ENCODE measurements at regions of chr5 and their contacts with region 1.

Region 1: DNA sequence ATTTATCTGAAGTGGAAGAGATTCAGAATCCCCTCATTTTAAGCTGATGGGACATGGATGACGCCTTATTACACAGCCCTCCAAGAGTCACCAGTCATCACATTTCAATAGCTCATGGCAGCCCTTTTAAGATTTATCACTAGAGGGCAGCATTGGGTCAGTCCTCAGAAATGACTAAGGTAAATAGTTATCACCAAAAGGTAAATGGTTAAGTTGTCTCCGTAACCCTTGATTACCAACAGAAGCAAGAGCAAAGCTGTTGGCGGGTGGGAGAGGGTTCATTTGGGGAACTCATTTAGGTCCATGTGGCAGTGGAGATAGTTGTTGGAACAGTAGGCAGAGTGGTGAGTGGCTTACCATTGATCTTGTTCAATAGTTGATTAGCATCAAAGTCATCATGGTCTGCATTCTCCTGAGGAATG is 12.0 kb upstream of the C9 start:
- DNase-seq: peak in 1 of 2 donors; percentile 66
- ATAC-seq: peak; percentile 57 to 81 (median 70)
- H3K4me3 ChIP-seq: no peak overlapping the region
- H3K4me3 Mint-ChIP-seq: no peak overlapping the region
- H3K27ac ChIP-seq: no peak overlapping the region
- H3K27ac Mint-ChIP-seq: peak overlapping the region in 1 of 2 donors; percentile 20
- H3K4me1 ChIP-seq: no peaks in the 10 kb centered on the region
- H3K4me1 Mint-ChIP-seq: peaks cover under 1 to 12% of the 10 kb centered on the region in 2 donors
- H3K27me3 ChIP-seq: no peaks in the 10 kb centered on the region
- H3K27me3 Mint-ChIP-seq: no peaks in the 10 kb centered on the region
- CTCF ChIP-seq: peak; percentile 78

Region 2: DNA sequence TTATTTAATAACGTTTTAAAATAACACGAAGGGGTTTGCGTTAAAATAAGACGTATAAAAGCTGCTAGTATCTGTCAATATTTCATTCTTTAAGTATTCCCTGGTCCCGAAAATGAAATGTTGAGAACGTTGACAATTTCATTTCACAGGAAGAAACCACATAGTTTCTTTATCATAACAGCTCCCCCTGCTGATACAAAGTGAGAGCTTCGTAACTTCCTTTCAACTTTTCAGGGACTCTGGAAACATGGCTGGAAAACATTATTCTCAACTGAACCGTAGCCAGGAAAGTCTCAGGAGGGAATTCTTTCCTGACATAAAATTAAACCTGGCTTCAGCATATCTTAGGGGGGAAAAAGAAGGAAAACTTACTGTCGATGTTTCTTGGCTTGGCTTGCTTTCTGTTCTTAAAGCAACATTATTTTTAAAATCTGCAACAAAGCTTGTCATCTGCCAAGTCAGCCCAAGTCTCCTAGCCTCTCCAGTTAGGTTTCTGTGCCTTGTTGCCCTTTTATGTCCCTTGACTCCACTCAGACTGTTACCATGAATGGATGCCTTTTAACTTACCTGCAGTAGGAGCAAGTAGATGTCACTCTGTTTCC is 171.3 kb after region 1 on chr5:
- intact Hi-C with region 1: loop called (anchors 1 kb)
- DNase-seq: peak in 1 of 2 donors; percentile 68
- ATAC-seq: peak; percentile 42 to 65 (median 46)
- H3K4me3 ChIP-seq: no peak overlapping the region
- H3K4me3 Mint-ChIP-seq: peak overlapping the region; percentile 18
- H3K27ac ChIP-seq: no peak overlapping the region
- H3K27ac Mint-ChIP-seq: peak overlapping the region in 1 of 2 donors; percentile 47
- H3K4me1 ChIP-seq: no peaks in the 10 kb centered on the region
- H3K4me1 Mint-ChIP-seq: peaks cover 0 to 5% of the 10 kb centered on the region in 2 donors
- H3K27me3 ChIP-seq: no peaks in the 10 kb centered on the region
- H3K27me3 Mint-ChIP-seq: no peaks in the 10 kb centered on the region
- CTCF ChIP-seq: peak; percentile 77

Region 3: GRCh38 chr5:39570403-39571027 is 194.2 kb after region 1 on chr5:
- intact Hi-C with region 1: loop called (anchors 1 kb)
- DNase-seq: peak in 1 of 2 donors; percentile 51
- ATAC-seq: peak in 2 of 3 donors; percentile 55 to 64
- H3K4me3 ChIP-seq: no peak overlapping the region
- H3K4me3 Mint-ChIP-seq: no peak overlapping the region
- H3K27ac ChIP-seq: no peak overlapping the region
- H3K27ac Mint-ChIP-seq: no peak overlapping the region
- H3K4me1 ChIP-seq: no peaks in the 10 kb centered on the region
- H3K4me1 Mint-ChIP-seq: no peaks in the 10 kb centered on the region
- H3K27me3 ChIP-seq: no peaks in the 10 kb centered on the region
- H3K27me3 Mint-ChIP-seq: peaks cover 0 to 7% of the 10 kb centered on the region in 2 donors
- CTCF ChIP-seq: peak; percentile 68

Measured in natural killer cell (primary cell).